B cell (primary cell): ENCODE measurements at regions of chr19 and their contacts with region 1.

Region 1: GRCh38 chr19:12965017-12965811 is 4.2 kb upstream of the DAND5 start:
- DNase-seq: peak; percentile 89
- ATAC-seq: peak; percentile 96
- H3K4me3 ChIP-seq: peak overlapping the region in 4 of 5 experiments; percentile 30 to 65 (median 58)
- H3K4me3 Mint-ChIP-seq: peak overlapping the region; percentile 98
- H3K27ac ChIP-seq: no peak overlapping the region
- H3K27ac Mint-ChIP-seq: peak overlapping the region; percentile 89
- H3K4me1 ChIP-seq: peaks cover 4 to 10% of the 10 kb centered on the region in 2 donors
- H3K4me1 Mint-ChIP-seq: peaks cover 6% of the 10 kb centered on the region
- H3K27me3 ChIP-seq: no peaks in the 10 kb centered on the region
- H3K27me3 Mint-ChIP-seq: peaks cover under 1% of the 10 kb centered on the region
- CTCF ChIP-seq: peak; percentile 92

Region 2: GRCh38 chr19:12881172-12881808 is 83.9 kb before region 1 on chr19 and contains the start of gene DNASE2:
- CTCF ChIA-PET with region 1: interaction called, 58 read pairs
- POLR2A ChIA-PET with region 1: interaction called, 7 read pairs
- intact Hi-C with region 1: loop called (anchors 1 kb)
- DNase-seq: peak; percentile 98
- ATAC-seq: peak; percentile 88
- H3K4me3 ChIP-seq: peak within 1 kb of the TSS; percentile 58 to 97 (median 83)
- H3K4me3 Mint-ChIP-seq: peak within 1 kb of the TSS; percentile 84
- H3K27ac ChIP-seq: peak within 1 kb of the TSS; percentile 94 to 98
- H3K27ac Mint-ChIP-seq: peak within 1 kb of the TSS; percentile 96
- H3K4me1 ChIP-seq: peaks cover 19 to 41% of the 10 kb centered on the region in 2 donors
- H3K4me1 Mint-ChIP-seq: peaks cover 27% of the 10 kb centered on the region
- H3K27me3 ChIP-seq: no peaks in the 10 kb centered on the region
- H3K27me3 Mint-ChIP-seq: no peaks in the 10 kb centered on the region
- CTCF ChIP-seq: no peak
- total RNA-seq, gene DNASE2: 26.6 and 30.8 TPM in 2 replicates

Region 3: GRCh38 chr19:12913851-12914690 is 51.1 kb before region 1 on chr19:
- CTCF ChIA-PET with region 1: interaction called, 4 read pairs
- POLR2A ChIA-PET with region 1: no interaction called
- intact Hi-C with region 1: loop called (anchors 1 kb)
- DNase-seq: peak; percentile 50
- ATAC-seq: peak; percentile 52
- H3K4me3 ChIP-seq: no peak overlapping the region
- H3K4me3 Mint-ChIP-seq: peak overlapping the region; percentile 48
- H3K27ac ChIP-seq: no peak overlapping the region
- H3K27ac Mint-ChIP-seq: peak overlapping the region; percentile 67
- H3K4me1 ChIP-seq: peaks cover 9 to 25% of the 10 kb centered on the region in 2 donors
- H3K4me1 Mint-ChIP-seq: peaks cover 17% of the 10 kb centered on the region
- H3K27me3 ChIP-seq: no peaks in the 10 kb centered on the region
- H3K27me3 Mint-ChIP-seq: no peaks in the 10 kb centered on the region
- CTCF ChIP-seq: no peak

Region 4: DNA sequence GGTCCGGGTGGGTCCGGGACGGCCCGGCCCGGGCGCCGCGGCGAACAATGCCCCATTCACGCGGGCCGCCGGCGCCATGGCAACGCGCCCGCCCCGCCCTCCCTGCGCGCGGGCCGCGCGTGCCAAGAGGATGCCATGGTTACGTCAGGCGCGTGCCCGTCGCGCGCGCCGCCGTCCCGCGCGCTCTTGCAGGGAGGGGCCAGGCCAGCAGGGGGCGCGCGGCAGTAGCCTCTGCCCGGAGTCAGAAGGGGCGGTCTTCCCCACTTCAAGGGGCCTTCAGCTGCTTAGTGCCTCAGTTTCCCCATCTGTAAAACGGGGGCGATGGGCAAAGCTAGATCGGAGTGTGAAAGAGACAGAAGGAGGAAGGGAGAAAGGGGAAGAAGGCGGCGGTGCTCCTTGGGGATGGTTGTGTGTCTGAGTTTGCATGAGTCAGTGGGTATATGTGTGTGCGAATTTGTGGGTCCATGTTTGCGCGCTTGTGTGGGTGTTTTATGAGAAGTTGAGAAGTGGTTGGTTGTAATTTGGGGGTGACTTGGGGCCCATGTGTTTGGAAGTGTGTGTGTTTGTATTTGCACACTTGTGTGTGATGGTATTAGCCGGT is 18.4 kb after region 1 on chr19:
- CTCF ChIA-PET with region 1: interaction called, 71 read pairs
- POLR2A ChIA-PET with region 1: no interaction called
- intact Hi-C with region 1: no loop called
- DNase-seq: peak; percentile 93
- ATAC-seq: peak; percentile 77
- H3K4me3 ChIP-seq: peak overlapping the region in 4 of 5 experiments; percentile 24 to 62 (median 36)
- H3K4me3 Mint-ChIP-seq: no peak overlapping the region
- H3K27ac ChIP-seq: no peak overlapping the region
- H3K27ac Mint-ChIP-seq: no peak overlapping the region
- H3K4me1 ChIP-seq: peaks cover 30 to 43% of the 10 kb centered on the region in 2 donors
- H3K4me1 Mint-ChIP-seq: peaks cover 15% of the 10 kb centered on the region
- H3K27me3 ChIP-seq: peaks cover 0 to 10% (median 2%) of the 10 kb centered on the region in 4 experiments
- H3K27me3 Mint-ChIP-seq: peaks cover 4% of the 10 kb centered on the region
- CTCF ChIP-seq: peak; percentile 91

Region 5: GRCh38 chr19:13087795-13088537 is 122.8 kb after region 1 on chr19:
- CTCF ChIA-PET with region 1: interaction called, 75 read pairs
- POLR2A ChIA-PET with region 1: interaction called, 10 read pairs
- intact Hi-C with region 1: no loop called
- DNase-seq: no peak
- ATAC-seq: no peak
- H3K4me3 ChIP-seq: no peak overlapping the region
- H3K4me3 Mint-ChIP-seq: no peak overlapping the region
- H3K27ac ChIP-seq: no peak overlapping the region
- H3K27ac Mint-ChIP-seq: no peak overlapping the region
- H3K4me1 ChIP-seq: no peaks in the 10 kb centered on the region
- H3K4me1 Mint-ChIP-seq: no peaks in the 10 kb centered on the region
- H3K27me3 ChIP-seq: no peaks in the 10 kb centered on the region
- H3K27me3 Mint-ChIP-seq: peaks cover 4% of the 10 kb centered on the region
- CTCF ChIP-seq: no peak